ENCODE measurements at regions of chr1 and their contacts with region 1.

Region 1: GRCh38 chr1:184827600-184828368 is 73.1 kb upstream of the EDEM3 start:
- DNase-seq: no peak

Region 2: DNA sequence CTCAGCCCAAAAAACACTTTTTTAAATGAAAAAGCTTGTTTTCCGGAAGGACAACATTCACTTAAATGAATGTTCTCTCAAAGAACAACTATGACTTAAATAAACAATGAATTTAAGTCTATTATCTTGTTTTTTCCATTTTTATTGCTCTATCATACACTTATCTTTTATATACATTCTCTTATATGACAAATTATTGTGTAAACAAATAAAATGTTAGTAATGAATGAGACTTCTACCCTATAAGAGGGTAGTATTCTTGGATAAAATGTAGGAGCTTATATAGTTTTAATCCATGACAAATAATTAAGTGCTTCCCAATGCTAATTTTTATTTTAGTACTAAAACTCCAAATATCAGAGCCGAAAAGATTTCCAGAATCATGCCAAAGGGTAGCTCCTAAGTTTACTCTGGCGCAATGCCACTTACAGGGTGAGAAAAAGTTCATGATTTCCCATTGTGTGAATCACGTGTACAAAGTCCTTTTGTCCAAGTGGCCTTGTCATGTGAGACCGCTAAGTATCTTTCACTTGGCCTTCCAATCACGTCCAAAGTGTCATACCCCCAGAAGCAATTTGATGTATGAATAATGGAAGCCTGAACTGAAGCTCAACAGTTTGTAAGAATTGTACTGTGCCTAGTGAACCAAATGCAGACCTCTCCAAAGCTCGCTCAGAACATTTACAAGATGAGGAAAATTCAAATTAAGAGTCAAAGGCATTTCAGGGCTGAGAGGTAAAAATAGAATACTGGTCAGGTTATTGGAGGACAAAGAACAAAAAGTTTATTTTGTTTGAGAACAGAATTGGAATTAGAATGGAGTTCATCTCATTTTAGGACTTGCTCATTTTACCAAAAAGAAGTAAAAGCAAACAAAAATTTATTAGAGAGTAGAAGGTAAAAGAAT is 497.6 kb before region 1 on chr1:
- intact Hi-C with region 1: no loop called
- DNase-seq: no peak

Region 3: GRCh38 chr1:184472136-184472535 is 355.6 kb before region 1 on chr1:
- intact Hi-C with region 1: no loop called
- DNase-seq: no peak

Region 4: GRCh38 chr1:184574588-184574987 is 253.2 kb before region 1 on chr1:
- intact Hi-C with region 1: no loop called
- DNase-seq: no peak

Region 5: GRCh38 chr1:184881941-184882913 is 54.4 kb after region 1 on chr1:
- intact Hi-C with region 1: loop called (anchors 5 kb)
- DNase-seq: no peak

Region 6: GRCh38 chr1:184973272-184974055 is 145.7 kb after region 1 on chr1:
- intact Hi-C with region 1: loop called (anchors 1 kb)
- DNase-seq: peak; percentile 89

Region 7: DNA sequence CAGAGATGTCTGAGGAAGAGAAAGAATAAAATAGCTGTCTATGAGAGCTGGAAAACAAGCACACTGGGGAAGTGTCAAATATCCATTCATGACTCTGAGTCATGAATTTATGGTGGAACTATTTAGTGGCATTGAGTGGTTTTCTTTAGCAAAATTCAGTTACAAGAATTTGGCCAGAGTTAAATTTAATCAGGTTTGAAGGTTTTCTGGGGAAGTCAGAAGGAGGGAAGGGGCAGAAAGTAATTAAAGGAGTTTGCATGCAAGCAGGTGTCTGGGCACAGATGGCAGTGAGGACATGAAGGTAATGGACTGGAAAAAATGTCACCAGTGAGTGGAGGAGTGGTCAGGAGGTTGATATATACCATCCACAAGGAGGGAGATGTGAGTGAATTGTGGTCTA is 611.2 kb after region 1 on chr1:
- intact Hi-C with region 1: no loop called
- DNase-seq: no peak